Mammary epithelial cell (primary cell): ENCODE measurements at regions of chr2 and their contacts with region 1.

Region 1: DNA sequence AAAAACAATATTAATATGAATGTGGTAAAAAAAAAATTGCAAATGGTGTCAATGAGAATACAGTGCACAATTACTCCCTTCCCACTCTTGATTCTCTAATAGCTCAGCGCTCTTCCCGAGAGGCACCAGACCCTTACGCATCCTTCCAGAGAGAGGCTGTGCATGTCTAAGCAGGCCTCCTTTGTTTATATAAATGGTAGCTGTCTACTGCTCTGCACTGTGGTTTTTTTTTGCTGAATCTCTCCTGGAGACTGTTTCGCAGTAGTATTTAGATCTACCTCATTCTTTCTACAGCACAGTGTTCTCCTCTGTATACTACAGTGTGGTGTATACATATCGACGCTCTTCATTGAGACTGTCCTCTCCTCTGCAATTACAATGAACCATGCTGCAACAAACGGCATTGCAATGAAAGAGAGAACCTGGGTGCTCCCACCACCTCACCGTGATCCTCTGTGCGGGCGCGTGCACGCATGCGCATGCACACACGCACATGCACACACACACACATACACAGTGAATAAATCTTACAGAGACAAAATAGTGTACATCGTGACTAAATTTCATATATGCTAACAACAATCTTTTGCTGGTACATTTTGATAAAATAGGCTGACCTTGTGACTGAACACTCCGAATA is 19.4 kb downstream of the SEPTIN10 start:
- DNase-seq: peak; percentile 81
- H3K4me3 ChIP-seq: no peak overlapping the region
- H3K27ac ChIP-seq: no peak overlapping the region
- H3K4me1 ChIP-seq: peaks cover 12% of the 10 kb centered on the region
- H3K27me3 ChIP-seq: no peaks in the 10 kb centered on the region
- CTCF ChIP-seq: no peak

Region 2: DNA sequence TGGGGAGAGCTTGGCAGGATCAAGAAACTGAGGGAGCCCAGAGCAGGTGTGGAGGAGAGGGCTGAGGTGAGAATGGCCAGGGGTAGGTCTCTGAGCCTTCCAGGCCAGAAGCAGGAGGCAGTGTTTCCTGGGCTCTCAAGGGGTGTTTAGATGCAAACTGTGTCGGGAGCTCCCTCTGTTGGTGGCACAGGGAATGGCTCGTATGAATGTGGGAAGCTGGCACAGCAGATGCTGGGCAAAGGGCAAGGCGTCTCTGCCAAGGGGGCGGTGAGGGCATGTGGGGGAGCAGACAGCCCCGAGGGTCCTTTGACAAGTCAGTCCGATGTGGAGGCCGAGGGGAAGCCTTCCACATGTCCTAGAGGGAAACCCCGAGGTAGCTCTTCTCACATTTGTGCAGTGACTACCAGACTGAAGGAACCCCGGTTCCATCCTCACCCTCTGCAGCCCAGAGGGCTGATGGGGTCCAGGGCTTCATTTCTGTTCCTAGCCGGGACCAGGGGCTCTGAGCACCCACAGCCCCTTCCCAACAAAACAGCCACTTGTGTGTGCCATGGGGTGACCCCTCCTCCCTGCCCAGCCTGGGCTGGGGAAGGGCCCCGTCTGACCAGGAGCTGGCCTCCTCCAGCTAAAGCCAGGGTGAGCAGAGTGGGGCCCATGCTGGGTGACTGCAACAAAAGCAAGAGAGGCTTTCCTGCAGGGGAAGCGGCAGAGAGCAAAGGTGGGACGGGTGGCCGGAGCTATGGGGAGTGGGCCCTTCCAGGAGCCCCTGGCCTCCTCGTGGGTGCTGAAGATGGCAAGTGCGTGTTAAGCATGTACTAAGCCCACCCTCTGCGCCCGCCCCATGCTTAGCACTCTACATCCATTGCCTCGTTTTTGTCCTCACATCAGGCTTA is 84.0 kb before region 1 on chr2:
- CTCF ChIA-PET with region 1: no interaction called
- dilution Hi-C with region 1: no loop called
- in situ Hi-C with region 1: no loop called
- intact Hi-C with region 1: no loop called
- DNase-seq: peak; percentile 50
- H3K4me3 ChIP-seq: no peak overlapping the region
- H3K27ac ChIP-seq: no peak overlapping the region
- H3K4me1 ChIP-seq: peaks cover 5% of the 10 kb centered on the region
- H3K27me3 ChIP-seq: no peaks in the 10 kb centered on the region
- CTCF ChIP-seq: peak; percentile 89 to 97

Region 3: DNA sequence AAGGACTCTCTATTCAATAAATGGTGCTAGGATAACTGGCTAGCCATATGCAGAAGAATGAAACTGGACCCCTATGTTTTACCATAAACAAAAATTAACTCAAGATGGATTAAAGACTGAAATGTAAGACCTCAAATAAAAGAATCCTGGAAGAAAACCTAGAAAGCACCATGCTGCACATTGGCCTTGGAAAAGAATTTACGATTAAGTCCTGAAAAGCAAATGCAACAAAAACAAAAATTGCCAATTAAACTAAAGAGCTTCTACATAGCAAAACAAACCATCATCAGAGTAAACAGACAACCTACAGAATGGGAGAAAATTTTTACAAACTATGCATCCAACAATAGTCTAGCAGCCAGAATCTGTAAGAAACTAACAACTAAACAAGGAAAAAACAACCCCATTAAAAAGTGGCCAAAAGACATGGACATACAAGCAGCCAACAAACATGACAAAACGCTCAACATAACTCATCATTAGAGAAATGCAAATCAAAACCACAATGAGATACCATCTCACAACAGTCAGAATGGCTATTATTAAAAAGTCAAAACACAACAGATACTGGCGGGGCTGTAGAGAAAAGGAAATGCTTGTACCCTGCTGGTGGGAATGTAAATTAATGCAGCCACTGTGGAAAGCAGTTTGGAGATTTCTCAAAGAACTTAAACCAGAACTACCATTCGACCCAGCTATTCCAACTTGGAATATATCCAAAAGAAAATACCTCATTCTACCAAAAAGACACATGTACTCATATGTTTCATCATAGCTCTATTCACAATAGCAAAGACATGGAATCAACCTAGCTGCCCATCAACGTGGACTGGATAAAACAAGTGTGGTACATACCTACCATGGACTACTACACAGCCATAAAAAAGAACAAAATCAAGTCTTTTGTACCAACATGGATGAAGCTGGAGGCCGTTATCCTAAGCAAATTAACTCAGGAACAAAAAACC is 11.2 kb before region 1 on chr2:
- CTCF ChIA-PET with region 1: interaction called, 38 read pairs
- dilution Hi-C with region 1: no loop called
- in situ Hi-C with region 1: no loop called
- intact Hi-C with region 1: no loop called
- DNase-seq: peak; percentile 55
- H3K4me3 ChIP-seq: no peak overlapping the region
- H3K27ac ChIP-seq: no peak overlapping the region
- H3K4me1 ChIP-seq: no peaks in the 10 kb centered on the region
- H3K27me3 ChIP-seq: no peaks in the 10 kb centered on the region
- CTCF ChIP-seq: no peak